ENCODE measurements at regions of chr16 and their contacts with region 1.

Region 1: DNA sequence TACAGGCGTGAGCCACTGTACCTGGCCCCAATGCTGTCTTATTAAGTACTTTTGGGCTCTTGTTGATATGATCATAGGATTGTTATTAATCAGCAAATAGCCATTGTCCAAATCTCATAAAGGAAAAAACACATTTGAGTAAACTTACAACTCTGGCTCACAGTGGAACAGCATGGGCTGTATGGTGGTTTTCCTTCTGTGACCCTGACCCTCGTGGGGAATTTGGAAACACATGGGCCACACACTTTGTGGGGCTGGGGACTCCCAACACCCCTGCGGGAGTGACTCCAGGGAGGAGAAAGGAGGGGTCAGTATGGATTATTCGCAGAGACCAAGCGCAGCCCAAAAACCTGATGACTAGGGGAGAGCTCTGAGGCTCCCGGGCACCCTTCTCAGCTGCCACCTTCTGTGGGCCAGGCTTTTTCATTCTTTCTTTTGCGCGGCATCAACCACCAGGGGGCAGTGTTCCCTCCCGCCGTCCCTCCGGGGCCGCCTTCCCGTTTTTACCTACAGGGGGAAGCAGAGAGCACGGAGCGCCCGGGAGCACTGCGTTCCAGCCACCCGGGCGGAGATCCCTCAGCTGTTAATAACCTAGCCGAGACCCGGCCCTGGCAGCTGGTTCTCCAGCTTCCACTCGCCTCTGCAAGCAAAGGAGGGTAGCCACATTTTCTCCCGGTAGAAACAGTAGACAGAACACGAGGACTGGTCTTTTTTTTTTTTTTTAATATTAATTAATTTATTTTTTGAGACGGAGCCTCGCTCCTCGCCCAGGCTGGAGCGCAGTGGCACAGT is 9.7 kb downstream of the TSNAXIP1 start:
- DNase-seq: peak; percentile 85 to 92 (median 87)
- ATAC-seq: peak; percentile 79 to 97 (median 96)
- H3K4me3 ChIP-seq: peak overlapping the region in 1 of 12 donors; percentile 28
- H3K27ac ChIP-seq: no peak overlapping the region
- H3K4me1 ChIP-seq: peaks cover 0 to 6% (median 0%) of the 10 kb centered on the region in 12 donors
- H3K27me3 ChIP-seq: no peaks in the 10 kb centered on the region
- CTCF ChIP-seq: peak; percentile 100
- POLR2A ChIP-seq: peak in 1 of 2 donors; percentile 10

Region 2: GRCh38 chr16:67736858-67737257 is 79.6 kb before region 1 on chr16:
- intact Hi-C with region 1: no loop called
- DNase-seq: no peak
- ATAC-seq: peak in 1 of 4 donors; percentile 26
- H3K4me3 ChIP-seq: no peak overlapping the region
- H3K27ac ChIP-seq: no peak overlapping the region
- H3K4me1 ChIP-seq: no peaks in the 10 kb centered on the region
- H3K27me3 ChIP-seq: no peaks in the 10 kb centered on the region
- CTCF ChIP-seq: no peak
- POLR2A ChIP-seq: no peak

Region 3: GRCh38 chr16:67865316-67865715 is 48.9 kb after region 1 on chr16:
- intact Hi-C with region 1: loop called in 1 of 10 experiments (anchors 1 kb)
- DNase-seq: no peak
- ATAC-seq: no peak
- H3K4me3 ChIP-seq: no peak overlapping the region
- H3K27ac ChIP-seq: peak overlapping the region in 2 of 12 donors; percentile 87 to 93
- H3K4me1 ChIP-seq: peaks cover 6 to 52% (median 43%) of the 10 kb centered on the region in 12 donors
- H3K27me3 ChIP-seq: no peaks in the 10 kb centered on the region
- CTCF ChIP-seq: peak in 10 of 12 donors; percentile 19 to 51 (median 30)
- POLR2A ChIP-seq: no peak

Region 4: DNA sequence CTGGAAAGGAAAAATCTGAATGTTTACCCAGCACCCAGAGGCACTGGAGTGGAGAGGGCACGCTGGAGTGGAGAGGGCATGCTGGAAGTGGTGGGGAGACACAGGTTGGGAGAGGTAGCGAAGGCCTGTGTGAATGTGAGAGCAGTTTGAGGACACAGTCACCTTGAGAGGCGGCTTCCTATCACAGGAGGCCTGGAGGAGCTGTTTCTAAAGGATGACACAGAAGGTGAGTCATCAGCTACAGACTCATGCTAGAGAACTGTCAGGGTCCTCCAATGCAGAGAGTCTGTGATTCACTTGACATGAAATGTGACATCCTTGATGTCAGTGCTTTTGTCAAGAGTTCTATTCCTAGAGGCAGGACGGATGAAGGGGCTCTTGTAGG is 101.4 kb after region 1 on chr16:
- intact Hi-C with region 1: loop called in 1 of 10 experiments (anchors 5 kb)
- DNase-seq: no peak
- ATAC-seq: peak in 3 of 4 donors; percentile 19 to 69 (median 40)
- H3K4me3 ChIP-seq: no peak overlapping the region
- H3K27ac ChIP-seq: peak overlapping the region in 11 of 12 donors; percentile 31 to 76 (median 64)
- H3K4me1 ChIP-seq: peaks cover 0 to 83% (median 51%) of the 10 kb centered on the region in 12 donors
- H3K27me3 ChIP-seq: no peaks in the 10 kb centered on the region
- CTCF ChIP-seq: no peak
- POLR2A ChIP-seq: no peak

Region 5: GRCh38 chr16:68031951-68032350 is 215.5 kb after region 1 on chr16:
- intact Hi-C with region 1: loop called in 3 of 10 experiments (anchors 5 to 10 kb)
- DNase-seq: no peak
- ATAC-seq: no peak
- H3K4me3 ChIP-seq: no peak overlapping the region
- H3K27ac ChIP-seq: no peak overlapping the region
- H3K4me1 ChIP-seq: no peaks in the 10 kb centered on the region
- H3K27me3 ChIP-seq: no peaks in the 10 kb centered on the region
- CTCF ChIP-seq: no peak
- POLR2A ChIP-seq: no peak

Region 6: GRCh38 chr16:68064791-68065365 is 248.4 kb after region 1 on chr16:
- intact Hi-C with region 1: loop called in 1 of 10 experiments (anchors 1 kb)
- DNase-seq: peak; percentile 59 to 82 (median 75)
- ATAC-seq: peak; percentile 49 to 80 (median 78)
- H3K4me3 ChIP-seq: no peak overlapping the region
- H3K27ac ChIP-seq: peak overlapping the region in 10 of 12 donors; percentile 5 to 76 (median 32)
- H3K4me1 ChIP-seq: peaks cover 0 to 49% (median 19%) of the 10 kb centered on the region in 12 donors
- H3K27me3 ChIP-seq: no peaks in the 10 kb centered on the region
- CTCF ChIP-seq: peak; percentile 67 to 87 (median 79)
- POLR2A ChIP-seq: no peak